Mammary epithelial cell (primary cell): ENCODE measurements at regions of chr3 and their contacts with region 1.

Region 1: GRCh38 chr3:152385761-152386160 is 117.0 kb downstream of the MBNL1 start:
- DNase-seq: peak; percentile 41
- H3K4me3 ChIP-seq: no peak overlapping the region
- H3K27ac ChIP-seq: peak overlapping the region; percentile 63
- H3K4me1 ChIP-seq: peaks cover 34% of the 10 kb centered on the region
- H3K27me3 ChIP-seq: no peaks in the 10 kb centered on the region
- CTCF ChIP-seq: no peak

Region 2: GRCh38 chr3:151743855-151744254 is 641.9 kb before region 1 on chr3:
- CTCF ChIA-PET with region 1: no interaction called
- dilution Hi-C with region 1: no loop called
- in situ Hi-C with region 1: no loop called
- intact Hi-C with region 1: no loop called
- DNase-seq: no peak
- H3K4me3 ChIP-seq: no peak overlapping the region
- H3K27ac ChIP-seq: no peak overlapping the region
- H3K4me1 ChIP-seq: no peaks in the 10 kb centered on the region
- H3K27me3 ChIP-seq: no peaks in the 10 kb centered on the region
- CTCF ChIP-seq: no peak

Region 3: GRCh38 chr3:152298393-152299242 is 87.1 kb before region 1 on chr3:
- CTCF ChIA-PET with region 1: no interaction called
- dilution Hi-C with region 1: no loop called
- in situ Hi-C with region 1: no loop called
- intact Hi-C with region 1: loop called (anchors 5 kb)
- DNase-seq: peak; percentile 89
- H3K4me3 ChIP-seq: peak overlapping the region; percentile 32 to 52 (median 47)
- H3K27ac ChIP-seq: peak overlapping the region; percentile 79
- H3K4me1 ChIP-seq: peaks cover 39% of the 10 kb centered on the region
- H3K27me3 ChIP-seq: no peaks in the 10 kb centered on the region
- CTCF ChIP-seq: no peak

Region 4: DNA sequence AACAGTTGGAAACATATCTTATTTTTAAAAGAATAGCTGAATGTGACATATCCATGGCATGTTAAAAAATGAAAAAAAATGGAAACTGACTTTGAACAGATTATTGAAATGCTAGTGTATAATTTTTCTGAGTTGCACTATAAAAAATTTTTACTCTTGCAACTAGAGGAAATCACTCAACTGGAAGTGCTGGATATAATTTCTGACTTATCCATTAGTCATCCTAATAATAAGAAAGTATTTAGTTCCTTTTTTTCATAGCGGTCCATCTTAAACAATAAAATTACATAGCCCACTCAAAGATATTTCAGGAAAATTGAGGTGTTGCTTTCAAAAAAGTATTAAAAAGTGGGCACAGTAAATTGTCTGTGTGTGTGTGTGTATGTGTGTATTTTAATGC is 36.4 kb before region 1 on chr3:
- CTCF ChIA-PET with region 1: no interaction called
- dilution Hi-C with region 1: no loop called
- in situ Hi-C with region 1: no loop called
- intact Hi-C with region 1: loop called (anchors 5 kb)
- DNase-seq: peak; percentile 31
- H3K4me3 ChIP-seq: no peak overlapping the region
- H3K27ac ChIP-seq: peak overlapping the region; percentile 43
- H3K4me1 ChIP-seq: peaks cover 21% of the 10 kb centered on the region
- H3K27me3 ChIP-seq: no peaks in the 10 kb centered on the region
- CTCF ChIP-seq: no peak